Right ventricle myocardium inferior (tissue), 1 donor: ENCODE measurements at regions of chr10 and their contacts with region 1.

Region 1: GRCh38 chr10:33314811-33315561 is 19.5 kb downstream of the NRP1 start:
- DNase-seq: no peak
- ATAC-seq: no peak

Region 2: DNA sequence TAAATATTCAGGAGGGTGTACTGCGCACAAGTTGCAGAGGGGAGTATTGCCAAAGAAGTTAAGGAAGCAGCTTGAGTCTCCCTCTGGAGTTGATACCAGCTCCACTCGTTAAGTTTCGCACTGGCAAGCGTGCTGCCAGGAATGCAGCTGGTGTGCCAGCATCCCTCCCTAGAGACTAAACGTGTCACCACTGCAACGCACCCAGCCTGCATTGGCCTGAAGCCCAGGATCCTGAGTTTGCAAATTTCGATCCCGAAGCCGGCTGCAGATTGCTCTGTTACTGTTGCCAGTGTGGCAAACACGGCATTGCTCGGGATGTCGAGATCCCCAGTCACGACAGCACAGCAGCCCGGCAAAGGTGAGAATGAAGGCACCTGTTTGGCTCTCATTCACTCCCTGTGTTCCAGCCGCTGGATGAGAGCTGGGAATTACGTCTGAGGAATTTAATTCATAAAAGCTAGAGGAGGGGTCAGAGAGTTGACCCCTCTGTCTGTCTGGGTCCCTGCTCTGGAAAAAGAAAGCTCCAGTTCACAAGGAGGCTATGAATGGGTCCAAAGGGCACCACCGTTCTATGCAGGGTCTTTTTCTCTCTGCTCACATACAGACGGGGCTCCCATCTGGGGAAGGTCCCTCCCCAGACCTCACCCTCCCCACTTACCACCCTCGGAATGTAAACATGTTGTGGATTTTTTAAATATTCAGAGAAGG is 41.5 kb before region 1 on chr10:
- intact Hi-C with region 1: loop called (anchors 5 kb)
- DNase-seq: peak; percentile 92
- ATAC-seq: peak; percentile 92

Region 3: DNA sequence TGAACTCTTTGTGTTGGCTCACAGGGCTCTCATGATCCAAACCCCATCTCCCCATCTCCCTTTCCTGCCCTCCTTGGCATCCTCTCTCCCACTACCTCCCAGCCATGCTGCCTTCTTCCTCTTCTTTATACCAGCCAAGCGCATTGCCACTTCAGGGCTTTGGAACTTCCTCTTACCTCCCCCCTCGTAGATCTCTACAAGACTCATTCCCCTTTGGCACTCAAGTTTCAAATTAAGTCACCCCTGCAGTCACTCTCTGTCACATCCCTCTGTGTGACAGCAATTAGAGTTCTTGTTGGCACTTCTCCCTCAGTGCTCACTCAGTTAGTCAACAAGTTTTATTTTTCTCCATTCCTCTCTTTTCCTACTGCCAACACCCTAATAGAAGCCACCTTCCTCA is 40.3 kb after region 1 on chr10:
- intact Hi-C with region 1: no loop called
- DNase-seq: no peak
- ATAC-seq: peak; percentile 83